ENCODE measurements at regions of chr2 and their contacts with region 1.

Region 1: DNA sequence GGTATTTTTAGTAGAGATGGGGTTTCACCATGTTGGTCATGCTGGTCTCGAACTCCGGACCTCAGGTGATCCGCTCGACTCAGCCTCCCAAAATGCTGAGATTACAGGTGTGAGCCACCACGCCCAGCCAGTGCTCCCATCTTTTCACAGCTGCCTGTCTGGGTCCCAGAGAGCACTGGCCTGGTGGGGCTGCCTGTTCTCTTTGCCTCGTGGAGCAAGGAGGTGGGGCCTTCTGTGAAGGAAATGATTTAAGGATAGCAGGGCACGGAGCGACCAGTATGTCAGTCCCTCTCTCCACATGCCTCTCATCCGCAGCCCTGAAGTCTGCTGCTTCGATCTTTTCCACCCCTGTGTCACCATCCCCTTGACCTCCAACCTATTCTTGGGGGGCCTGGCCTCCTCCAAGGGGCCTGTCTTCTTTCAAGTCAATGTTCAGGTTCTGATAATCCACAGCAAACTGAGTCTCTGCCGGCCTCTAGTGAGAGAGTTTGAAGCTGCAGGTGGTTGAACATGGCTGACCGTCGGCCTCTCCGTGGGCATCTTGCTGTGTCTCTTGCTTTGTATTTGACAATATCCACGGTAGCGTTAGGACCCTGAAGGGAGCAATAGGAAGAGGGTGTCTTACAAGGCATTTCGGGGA is 28.2 kb upstream of the GIGYF2 start:
- DNase-seq: peak; percentile 27 to 51 (median 32)
- H3K4me3 ChIP-seq: no peak overlapping the region
- H3K27ac ChIP-seq: no peak overlapping the region
- H3K4me1 ChIP-seq: no peaks in the 10 kb centered on the region
- H3K27me3 ChIP-seq: no peaks in the 10 kb centered on the region
- CTCF ChIP-seq: peak in 2 of 3 donors; percentile 34 to 52
- EP300 ChIP-seq: no peak
- POLR2A ChIP-seq: no peak

Region 2: DNA sequence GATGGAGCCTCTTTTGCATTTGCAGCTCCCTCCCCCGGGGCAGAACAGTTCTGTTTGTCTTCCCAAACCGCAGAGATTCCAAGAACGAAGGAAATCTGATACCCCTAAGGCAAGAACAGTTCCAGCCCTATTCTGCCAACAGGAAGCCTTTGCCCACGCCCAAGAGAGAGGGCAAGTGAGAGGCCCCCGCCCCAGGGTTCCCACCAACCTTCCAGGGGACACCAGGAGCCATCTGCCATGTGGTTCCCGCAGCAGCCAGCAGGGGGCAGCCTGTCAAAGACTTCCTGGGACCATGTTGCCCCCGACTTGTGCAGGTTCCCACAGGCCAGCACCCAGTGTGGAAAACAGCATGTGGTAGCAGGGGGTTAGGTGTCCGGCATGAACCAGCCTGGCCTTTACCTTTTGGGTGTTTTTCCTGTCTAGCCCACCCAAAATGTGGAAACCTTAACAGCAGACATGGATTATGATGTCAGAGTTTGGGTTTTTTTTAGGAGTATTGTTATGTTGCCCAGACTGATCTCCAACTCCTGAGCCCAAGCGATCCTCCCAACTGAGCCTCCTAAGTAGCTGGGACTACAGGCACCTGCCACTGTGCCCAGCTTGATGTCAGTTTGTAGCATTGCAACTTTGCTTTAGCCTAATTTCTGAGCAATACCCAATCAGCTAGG is 57.2 kb before region 1 on chr2:
- intact Hi-C with region 1: loop called in 2 of 4 experiments (anchors 2 to 5 kb)
- DNase-seq: peak; percentile 40 to 77 (median 69)
- H3K4me3 ChIP-seq: no peak overlapping the region
- H3K27ac ChIP-seq: no peak overlapping the region
- H3K4me1 ChIP-seq: peaks cover 5% of the 10 kb centered on the region
- H3K27me3 ChIP-seq: no peaks in the 10 kb centered on the region
- CTCF ChIP-seq: peak; percentile 35 to 67 (median 55)
- EP300 ChIP-seq: no peak
- POLR2A ChIP-seq: no peak

Region 3: DNA sequence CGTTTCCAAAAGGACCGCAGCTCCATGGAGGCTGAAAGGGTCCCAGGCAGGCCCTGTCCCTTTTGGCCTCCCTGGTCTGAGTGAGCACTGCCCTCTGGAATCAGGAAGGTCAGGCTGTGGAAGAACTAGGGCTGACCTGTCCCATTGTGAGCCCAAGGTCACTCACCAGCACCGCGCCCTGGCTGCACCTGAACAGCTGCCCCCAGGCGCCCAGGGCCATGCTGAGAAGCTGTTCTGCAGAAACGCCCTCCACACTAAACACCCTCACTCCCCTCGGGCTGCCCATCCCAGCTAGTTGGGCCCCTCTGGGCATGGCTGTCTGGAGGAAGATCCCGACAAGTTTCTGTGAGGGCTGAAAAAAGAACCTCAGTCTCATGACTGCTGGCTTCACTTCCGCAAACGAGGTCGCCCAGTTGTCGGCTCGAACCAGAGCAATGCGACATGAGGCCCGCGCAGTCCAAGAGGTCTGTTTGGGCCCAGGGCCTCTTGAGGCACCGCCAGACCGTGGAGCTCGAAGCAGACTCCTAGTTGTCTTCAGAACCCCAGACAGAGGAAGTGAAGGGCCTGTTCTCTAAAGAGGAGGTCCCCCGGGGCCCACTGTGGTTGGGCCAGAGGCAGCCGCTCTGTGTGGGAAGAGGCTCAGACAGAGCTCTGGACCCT is 455.6 kb after region 1 on chr2:
- intact Hi-C with region 1: no loop called
- DNase-seq: no peak
- H3K4me3 ChIP-seq: no peak overlapping the region
- H3K27ac ChIP-seq: no peak overlapping the region
- H3K4me1 ChIP-seq: no peaks in the 10 kb centered on the region
- H3K27me3 ChIP-seq: no peaks in the 10 kb centered on the region
- CTCF ChIP-seq: no peak
- EP300 ChIP-seq: no peak
- POLR2A ChIP-seq: no peak

Region 4: GRCh38 chr2:233686928-233687327 is 1018.0 kb after region 1 on chr2:
- intact Hi-C with region 1: no loop called
- DNase-seq: no peak
- H3K4me3 ChIP-seq: no peak overlapping the region
- H3K27ac ChIP-seq: no peak overlapping the region
- H3K4me1 ChIP-seq: no peaks in the 10 kb centered on the region
- H3K27me3 ChIP-seq: no peaks in the 10 kb centered on the region
- CTCF ChIP-seq: no peak
- EP300 ChIP-seq: no peak
- POLR2A ChIP-seq: no peak

Measured in ovary (tissue), 10 donors.